ENCODE measurements at regions of chr10 and their contacts with region 1.

Region 1: GRCh38 chr10:100827819-100828737 is 82.7 kb downstream of the PAX2 start:
- DNase-seq: peak; percentile 63
- ATAC-seq: peak; percentile 46
- H3K4me3 ChIP-seq: peak overlapping the region in 4 of 5 experiments; percentile 46 to 71 (median 62)
- H3K4me3 Mint-ChIP-seq: peak overlapping the region; percentile 87
- H3K27ac ChIP-seq: no peak overlapping the region
- H3K27ac Mint-ChIP-seq: peak overlapping the region; percentile 53
- H3K4me1 ChIP-seq: peaks cover 49 to 54% of the 10 kb centered on the region in 2 donors
- H3K4me1 Mint-ChIP-seq: peaks cover 43% of the 10 kb centered on the region
- H3K27me3 ChIP-seq: peaks cover 0 to 91% (median 59%) of the 10 kb centered on the region in 4 experiments
- H3K27me3 Mint-ChIP-seq: peaks cover 75% of the 10 kb centered on the region
- CTCF ChIP-seq: no peak

Region 2: GRCh38 chr10:100446130-100446761 is 381.8 kb before region 1 on chr10:
- CTCF ChIA-PET with region 1: no interaction called
- POLR2A ChIA-PET with region 1: no interaction called
- intact Hi-C with region 1: no loop called
- DNase-seq: no peak
- ATAC-seq: no peak
- H3K4me3 ChIP-seq: no peak overlapping the region
- H3K4me3 Mint-ChIP-seq: no peak overlapping the region
- H3K27ac ChIP-seq: no peak overlapping the region
- H3K27ac Mint-ChIP-seq: no peak overlapping the region
- H3K4me1 ChIP-seq: no peaks in the 10 kb centered on the region
- H3K4me1 Mint-ChIP-seq: no peaks in the 10 kb centered on the region
- H3K27me3 ChIP-seq: peaks cover 0 to 5% (median 0%) of the 10 kb centered on the region in 4 experiments
- H3K27me3 Mint-ChIP-seq: peaks cover 18% of the 10 kb centered on the region
- CTCF ChIP-seq: no peak

Region 3: DNA sequence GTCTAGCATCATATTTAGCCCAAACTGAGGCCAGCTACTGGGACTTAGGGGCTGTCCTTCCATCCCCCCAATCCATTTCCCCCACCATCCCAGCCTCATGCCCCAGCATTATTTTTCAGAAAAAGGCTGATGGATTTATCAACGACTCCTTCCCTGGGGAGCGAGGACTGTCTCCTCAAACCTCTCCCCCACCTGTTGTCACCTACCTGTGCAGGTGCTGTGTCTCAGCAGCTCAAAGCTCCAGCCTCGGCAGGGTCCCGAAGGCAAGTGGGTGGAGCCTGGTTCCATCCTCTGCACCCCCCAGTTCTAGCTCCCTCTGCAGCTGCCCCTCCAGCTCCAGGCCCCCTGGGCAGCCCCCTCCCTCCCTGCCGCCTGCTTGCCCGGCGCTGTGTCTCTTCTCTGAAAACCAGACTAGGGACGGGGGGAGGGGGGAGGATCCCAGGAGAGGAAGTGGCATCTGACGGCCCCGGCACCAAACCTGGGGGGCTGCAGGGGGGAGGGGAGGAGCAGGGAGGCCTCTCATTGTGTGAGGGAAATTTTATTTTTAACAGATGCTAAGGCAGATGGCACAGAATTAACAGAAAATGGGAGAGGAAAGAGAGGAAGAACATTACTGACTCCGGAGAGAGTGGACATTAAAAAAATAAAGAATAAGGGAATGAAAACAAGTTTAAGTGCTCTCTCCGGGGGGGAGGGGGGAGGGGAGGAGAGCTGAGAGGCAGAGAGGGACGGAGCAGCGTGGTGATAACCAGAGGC is 144.4 kb before region 1 on chr10:
- CTCF ChIA-PET with region 1: no interaction called
- POLR2A ChIA-PET with region 1: no interaction called
- intact Hi-C with region 1: loop called (anchors 5 kb)
- DNase-seq: no peak
- ATAC-seq: no peak
- H3K4me3 ChIP-seq: no peak overlapping the region
- H3K4me3 Mint-ChIP-seq: no peak overlapping the region
- H3K27ac ChIP-seq: no peak overlapping the region
- H3K27ac Mint-ChIP-seq: no peak overlapping the region
- H3K4me1 ChIP-seq: peaks cover 0 to 5% of the 10 kb centered on the region in 2 donors
- H3K4me1 Mint-ChIP-seq: no peaks in the 10 kb centered on the region
- H3K27me3 ChIP-seq: peaks cover 0 to 74% (median 58%) of the 10 kb centered on the region in 4 experiments
- H3K27me3 Mint-ChIP-seq: peaks cover 72% of the 10 kb centered on the region
- CTCF ChIP-seq: no peak

Region 4: DNA sequence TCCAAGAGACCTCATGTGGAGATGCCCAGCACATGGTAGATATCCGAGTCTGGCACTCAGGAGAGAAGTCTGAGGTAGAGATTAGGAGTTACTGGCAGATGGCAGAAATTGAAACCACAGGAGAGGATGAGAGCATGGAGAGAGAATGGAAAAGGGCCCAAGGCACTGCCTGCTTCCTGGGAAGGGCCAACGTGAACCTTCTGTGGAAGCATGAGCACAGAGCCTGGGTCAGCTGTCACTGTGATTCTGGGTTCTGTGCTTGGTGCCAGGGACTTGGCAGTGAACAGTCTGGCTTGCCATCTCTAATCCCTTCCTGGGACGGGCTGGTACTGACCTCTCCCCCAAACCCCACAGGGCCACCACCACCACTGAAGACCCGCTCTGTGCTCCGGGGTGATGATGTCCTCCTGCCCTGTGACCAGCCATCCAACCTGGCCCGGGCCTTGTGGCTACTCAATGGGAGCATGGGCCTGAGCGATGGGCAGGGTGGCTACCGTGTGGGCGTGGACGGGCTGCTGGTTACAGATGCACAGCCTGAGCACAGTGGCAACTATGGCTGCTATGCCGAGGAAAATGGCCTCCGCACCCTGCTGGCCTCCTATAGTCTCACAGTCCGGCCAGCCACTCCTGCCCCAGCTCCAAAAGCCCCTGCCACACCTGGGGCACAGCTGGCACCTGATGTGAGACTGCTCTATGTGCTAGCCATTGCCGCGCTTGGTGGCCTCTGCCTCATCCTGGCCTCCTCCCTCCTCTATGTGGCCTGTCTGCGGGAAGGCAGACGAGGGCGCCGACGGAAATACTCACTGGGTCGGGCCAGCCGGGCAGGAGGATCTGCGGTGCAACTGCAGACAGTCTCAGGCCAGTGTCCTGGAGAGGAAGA is 155.1 kb after region 1 on chr10:
- CTCF ChIA-PET with region 1: no interaction called
- POLR2A ChIA-PET with region 1: no interaction called
- intact Hi-C with region 1: no loop called
- DNase-seq: no peak
- ATAC-seq: no peak
- H3K4me3 ChIP-seq: no peak overlapping the region
- H3K4me3 Mint-ChIP-seq: no peak overlapping the region
- H3K27ac ChIP-seq: no peak overlapping the region
- H3K27ac Mint-ChIP-seq: no peak overlapping the region
- H3K4me1 ChIP-seq: peaks cover 12 to 16% of the 10 kb centered on the region in 2 donors
- H3K4me1 Mint-ChIP-seq: peaks cover 26% of the 10 kb centered on the region
- H3K27me3 ChIP-seq: no peaks in the 10 kb centered on the region
- H3K27me3 Mint-ChIP-seq: no peaks in the 10 kb centered on the region
- CTCF ChIP-seq: no peak

Region 5: GRCh38 chr10:100998991-100999741 is 171.1 kb after region 1 on chr10:
- CTCF ChIA-PET with region 1: no interaction called
- POLR2A ChIA-PET with region 1: no interaction called
- intact Hi-C with region 1: no loop called
- DNase-seq: peak; percentile 88
- ATAC-seq: peak; percentile 59
- H3K4me3 ChIP-seq: peak overlapping the region; percentile 37 to 89 (median 86)
- H3K4me3 Mint-ChIP-seq: peak overlapping the region; percentile 95
- H3K27ac ChIP-seq: peak overlapping the region; percentile 84 to 87
- H3K27ac Mint-ChIP-seq: peak overlapping the region; percentile 96
- H3K4me1 ChIP-seq: peaks cover 22 to 34% of the 10 kb centered on the region in 2 donors
- H3K4me1 Mint-ChIP-seq: peaks cover 29% of the 10 kb centered on the region
- H3K27me3 ChIP-seq: peaks cover 0 to 2% (median 0%) of the 10 kb centered on the region in 4 experiments
- H3K27me3 Mint-ChIP-seq: no peaks in the 10 kb centered on the region
- CTCF ChIP-seq: peak; percentile 88